ENCODE measurements at regions of chr11 and their contacts with region 1.

Region 1: DNA sequence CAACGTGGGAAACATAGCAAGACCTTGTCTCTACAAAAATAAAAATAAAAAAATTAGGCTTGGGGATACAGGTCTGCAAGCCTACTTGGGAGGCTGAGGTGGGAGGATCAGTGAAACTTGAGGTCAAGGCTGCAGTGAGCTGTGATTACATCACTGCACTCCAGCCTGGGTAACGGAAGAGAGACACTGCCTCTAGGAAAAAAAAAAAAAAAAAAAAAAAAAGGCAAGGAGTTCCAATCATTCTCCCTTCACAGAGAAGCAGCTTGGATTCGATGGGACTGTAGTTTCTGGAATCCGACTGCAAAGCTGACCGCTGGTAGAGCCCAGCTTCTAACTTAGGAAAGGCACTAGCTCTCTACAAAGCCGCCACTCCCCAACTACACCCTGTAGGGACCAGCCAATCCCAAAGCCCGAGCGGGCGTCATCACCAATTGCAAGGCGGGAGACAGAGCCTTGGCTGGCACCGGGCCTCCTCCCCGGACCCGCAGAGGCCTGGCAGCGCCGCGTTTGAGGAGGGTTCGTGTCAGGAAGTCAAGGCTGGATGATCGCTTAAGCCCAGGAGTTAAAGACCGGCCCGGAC is 699 bp upstream of the DDB2 start:
- DNase-seq: peak; percentile 94
- ATAC-seq: peak; percentile 80
- H3K4me3 Mint-ChIP-seq: peak overlapping the region; percentile 99
- H3K27ac Mint-ChIP-seq: peak overlapping the region; percentile 100
- H3K4me1 Mint-ChIP-seq: peaks cover 31% of the 10 kb centered on the region
- H3K27me3 Mint-ChIP-seq: no peaks in the 10 kb centered on the region

Region 2: GRCh38 chr11:46936138-46937110 is 277.7 kb before region 1 on chr11 and contains the start of gene CSTPP1:
- CTCF ChIA-PET with region 1: interaction called, 4 read pairs
- POLR2A ChIA-PET with region 1: interaction called, 4 read pairs
- intact Hi-C with region 1: loop called in 1 of 2 experiments (anchors 1 kb)
- DNase-seq: peak; percentile 97
- ATAC-seq: peak; percentile 96
- H3K4me3 Mint-ChIP-seq: peak within 1 kb of the TSS; percentile 86
- H3K27ac Mint-ChIP-seq: peak within 1 kb of the TSS; percentile 88
- H3K4me1 Mint-ChIP-seq: peaks cover 16% of the 10 kb centered on the region
- H3K27me3 Mint-ChIP-seq: peaks cover 5% of the 10 kb centered on the region
- total RNA-seq, gene CSTPP1: 17.9 to 18.6 TPM

Region 3: DNA sequence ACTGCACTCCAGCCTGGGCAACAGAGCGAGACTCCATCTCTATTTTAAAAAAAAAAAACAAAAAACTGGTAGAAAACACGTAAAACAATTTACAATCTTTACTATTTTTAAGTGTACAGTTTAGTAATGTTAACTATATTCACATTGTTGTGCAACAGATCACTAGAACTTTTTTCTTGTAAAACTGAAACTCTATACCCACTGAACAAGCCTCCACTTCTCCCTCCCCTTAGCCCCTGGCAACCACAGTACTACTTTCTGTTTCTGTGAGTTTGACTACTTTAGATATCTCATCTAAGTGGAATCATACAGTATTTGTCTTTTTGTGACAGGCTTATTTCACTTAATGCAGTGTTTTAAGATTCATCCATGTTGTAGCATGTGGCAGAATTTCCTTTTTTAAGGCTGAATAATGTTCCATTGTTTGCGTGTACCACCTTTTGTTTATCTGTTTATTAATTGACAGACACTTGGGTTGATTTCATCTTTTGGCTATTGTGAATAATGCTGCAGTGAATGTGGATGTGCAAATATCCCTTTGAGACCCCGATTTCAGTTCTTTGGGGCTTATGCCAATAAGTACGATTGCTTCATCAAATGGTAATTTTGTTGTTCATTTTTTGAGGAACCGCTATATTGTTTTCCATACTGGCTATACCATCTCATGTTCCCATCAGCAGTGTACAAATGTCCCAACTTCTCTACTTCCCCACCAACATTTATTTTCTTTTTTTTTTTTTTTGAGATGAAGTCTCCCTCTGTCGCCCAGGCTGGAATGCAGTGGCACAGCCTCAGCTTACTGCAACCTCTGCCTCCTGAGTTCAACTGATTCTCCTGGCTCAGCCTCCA is 11.7 kb after region 1 on chr11:
- CTCF ChIA-PET with region 1: interaction called, 5 read pairs
- POLR2A ChIA-PET with region 1: no interaction called
- intact Hi-C with region 1: loop called in 1 of 2 experiments (anchors 1 kb)
- DNase-seq: peak; percentile 60
- ATAC-seq: peak; percentile 98
- H3K4me3 Mint-ChIP-seq: peak overlapping the region; percentile 28
- H3K27ac Mint-ChIP-seq: peak overlapping the region; percentile 84
- H3K4me1 Mint-ChIP-seq: peaks cover 26% of the 10 kb centered on the region
- H3K27me3 Mint-ChIP-seq: no peaks in the 10 kb centered on the region

Region 4: DNA sequence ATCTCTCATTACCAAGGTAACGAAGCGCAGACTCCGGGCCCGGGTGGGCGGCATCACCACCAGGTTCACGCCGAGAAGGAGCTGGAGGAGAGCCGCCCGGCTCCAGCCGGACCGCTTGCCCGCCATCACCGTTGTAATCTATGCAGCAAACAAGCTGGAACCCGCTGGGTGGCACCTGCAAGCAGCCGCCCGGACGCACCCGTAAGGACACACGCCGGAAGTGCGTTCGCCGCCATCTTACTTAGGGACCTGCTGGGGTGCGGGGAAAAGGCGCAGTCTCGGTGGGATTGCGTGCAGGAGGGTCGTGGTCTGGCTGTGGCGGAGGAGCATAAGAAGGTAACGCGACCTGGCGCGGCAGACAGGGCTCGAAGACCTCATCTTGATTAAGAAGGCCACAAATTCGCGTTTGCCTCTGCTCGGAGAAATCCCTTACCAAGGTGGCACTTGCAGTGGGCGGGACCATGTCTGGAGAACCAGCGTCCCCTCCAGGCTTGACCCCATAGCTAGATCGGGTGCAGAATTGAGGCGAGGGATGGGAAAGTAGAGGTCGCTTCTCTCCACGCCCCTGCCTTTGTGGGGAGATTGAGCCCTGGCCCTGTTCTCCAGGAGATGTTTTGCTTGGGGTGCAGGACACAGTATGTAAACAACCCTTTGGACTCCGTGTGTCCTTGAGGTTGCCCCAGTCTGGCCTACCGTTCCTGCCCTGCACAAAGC is 34.7 kb after region 1 on chr11 and contains the start of gene ACP2:
- CTCF ChIA-PET with region 1: interaction called, 18 read pairs
- POLR2A ChIA-PET with region 1: interaction called, 18 read pairs
- intact Hi-C with region 1: loop called (anchors 1 kb)
- DNase-seq: peak; percentile 94
- ATAC-seq: peak; percentile 97
- H3K4me3 Mint-ChIP-seq: peak within 1 kb of the TSS; percentile 78
- H3K27ac Mint-ChIP-seq: peak within 1 kb of the TSS; percentile 95
- H3K4me1 Mint-ChIP-seq: peaks cover 22% of the 10 kb centered on the region
- H3K27me3 Mint-ChIP-seq: no peaks in the 10 kb centered on the region
- total RNA-seq, gene ACP2: 10.2 to 11.2 TPM

Region 5: DNA sequence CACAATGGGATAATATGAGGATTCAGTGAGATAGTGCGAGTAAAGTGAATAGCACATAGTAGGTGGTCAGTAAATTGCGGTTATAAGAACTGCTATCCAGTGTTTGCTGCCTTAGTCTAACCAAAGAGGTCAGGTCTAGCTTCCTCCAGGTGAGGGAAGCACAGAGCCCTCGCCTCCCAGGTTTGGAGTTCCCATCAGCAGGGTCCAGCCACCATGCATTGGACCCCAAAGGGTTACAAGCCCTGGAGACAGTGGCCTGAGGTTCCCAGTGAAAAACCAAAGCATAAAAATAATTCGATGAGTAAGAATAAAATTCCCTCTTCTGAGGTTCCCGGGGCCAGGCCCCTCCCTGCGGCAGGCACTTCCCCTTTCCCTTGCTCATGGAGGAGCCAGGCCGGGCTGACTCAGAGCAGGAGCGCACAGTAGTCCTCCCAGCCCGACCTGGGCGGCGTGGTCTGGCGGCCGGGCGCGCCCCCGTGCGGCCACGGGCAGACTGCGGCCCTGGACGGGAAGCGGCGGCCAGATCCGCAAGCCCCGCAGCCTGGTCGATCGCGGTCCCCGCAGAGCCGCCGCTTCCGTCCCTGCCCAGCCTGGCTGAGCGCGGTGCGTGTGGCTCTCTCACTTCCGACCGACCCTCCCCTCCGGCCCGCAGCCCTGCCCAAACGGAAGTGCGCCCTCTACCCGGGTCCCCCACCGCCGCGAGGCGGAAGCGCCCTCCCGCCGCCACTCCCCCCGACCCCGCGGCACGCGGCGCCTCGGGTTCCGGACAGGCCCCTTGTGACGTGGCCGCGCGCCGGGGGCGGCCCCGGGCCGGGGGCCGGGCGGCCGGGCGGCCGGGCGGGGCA is 193.9 kb after region 1 on chr11 and contains the start of gene SLC39A13:
- CTCF ChIA-PET with region 1: no interaction called
- POLR2A ChIA-PET with region 1: interaction called, 4 read pairs
- intact Hi-C with region 1: loop called in 1 of 2 experiments (anchors 1 kb)
- DNase-seq: peak; percentile 95
- ATAC-seq: peak; percentile 91
- H3K4me3 Mint-ChIP-seq: peak within 1 kb of the TSS; percentile 89
- H3K27ac Mint-ChIP-seq: peak within 1 kb of the TSS; percentile 94
- H3K4me1 Mint-ChIP-seq: peaks cover 16% of the 10 kb centered on the region
- H3K27me3 Mint-ChIP-seq: no peaks in the 10 kb centered on the region
- total RNA-seq, gene SLC39A13: 8.6 to 10.7 TPM

Region 6: DNA sequence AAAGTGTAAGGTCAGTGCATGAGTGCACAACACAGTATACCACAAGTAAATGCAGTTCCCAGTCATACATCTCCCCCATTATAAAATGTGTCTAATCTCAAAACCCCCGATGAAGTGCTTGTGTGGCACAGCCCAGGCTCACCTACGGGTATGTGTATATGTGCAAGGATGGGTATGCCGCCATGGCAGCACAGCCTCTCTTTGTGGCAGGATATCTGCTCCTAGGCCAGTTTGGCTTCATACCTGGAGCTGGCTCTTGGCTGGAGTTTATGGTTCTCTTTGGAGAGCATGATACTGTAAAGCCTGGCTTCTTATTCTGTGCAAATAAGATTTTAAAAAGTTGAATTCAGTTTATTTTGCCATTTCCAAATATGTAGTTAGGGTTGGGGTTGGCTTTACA is 446.0 kb after region 1 on chr11:
- CTCF ChIA-PET with region 1: no interaction called
- POLR2A ChIA-PET with region 1: no interaction called
- intact Hi-C with region 1: loop called in 1 of 2 experiments (anchors 5 kb)
- DNase-seq: no peak
- ATAC-seq: no peak
- H3K4me3 Mint-ChIP-seq: no peak overlapping the region
- H3K27ac Mint-ChIP-seq: no peak overlapping the region
- H3K4me1 Mint-ChIP-seq: peaks cover 19% of the 10 kb centered on the region
- H3K27me3 Mint-ChIP-seq: peaks cover 2% of the 10 kb centered on the region

Region 7: DNA sequence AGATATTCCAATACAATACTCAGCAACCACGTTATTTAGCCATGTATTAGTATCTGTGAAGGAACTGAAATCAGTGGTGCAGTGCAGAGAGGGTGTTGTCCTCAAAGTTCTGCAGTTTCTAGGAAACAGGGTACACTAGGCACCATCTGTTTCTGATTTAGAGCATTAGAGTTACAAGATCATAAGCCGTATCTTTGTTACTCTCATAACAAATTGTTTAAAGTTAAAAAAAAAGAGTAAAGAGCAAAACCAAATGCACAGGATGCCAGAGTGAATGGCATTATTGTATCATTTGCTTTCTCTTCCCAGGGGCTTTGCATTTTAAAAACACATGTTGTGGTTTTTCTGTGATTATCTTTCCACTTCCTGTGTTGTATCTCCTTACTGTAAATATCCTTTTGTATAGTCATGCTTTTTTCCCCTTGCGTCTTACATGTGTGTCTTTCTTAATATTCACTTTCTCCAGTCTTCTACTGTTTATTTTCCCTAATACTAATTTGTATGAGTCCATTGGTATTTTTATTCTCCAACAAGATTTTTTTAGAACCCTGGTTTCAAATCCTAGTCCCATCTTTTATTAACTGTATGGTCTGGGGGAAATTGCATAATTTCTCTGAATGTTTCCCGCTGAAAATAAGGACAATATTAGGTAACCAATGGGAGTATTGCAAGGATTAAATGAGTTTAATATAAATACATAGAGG is 649.3 kb after region 1 on chr11:
- CTCF ChIA-PET with region 1: no interaction called
- POLR2A ChIA-PET with region 1: no interaction called
- intact Hi-C with region 1: no loop called
- DNase-seq: no peak
- ATAC-seq: peak; percentile 56
- H3K4me3 Mint-ChIP-seq: no peak overlapping the region
- H3K27ac Mint-ChIP-seq: no peak overlapping the region
- H3K4me1 Mint-ChIP-seq: peaks cover 39% of the 10 kb centered on the region
- H3K27me3 Mint-ChIP-seq: no peaks in the 10 kb centered on the region

Measured in activated CD4-positive, alpha-beta T cell treated with anti-CD3 and anti-CD28 coated beads for 36 hours (primary cell).